A673 (cell line): ENCODE measurements at regions of chr11 and their contacts with region 1.

Region 1: DNA sequence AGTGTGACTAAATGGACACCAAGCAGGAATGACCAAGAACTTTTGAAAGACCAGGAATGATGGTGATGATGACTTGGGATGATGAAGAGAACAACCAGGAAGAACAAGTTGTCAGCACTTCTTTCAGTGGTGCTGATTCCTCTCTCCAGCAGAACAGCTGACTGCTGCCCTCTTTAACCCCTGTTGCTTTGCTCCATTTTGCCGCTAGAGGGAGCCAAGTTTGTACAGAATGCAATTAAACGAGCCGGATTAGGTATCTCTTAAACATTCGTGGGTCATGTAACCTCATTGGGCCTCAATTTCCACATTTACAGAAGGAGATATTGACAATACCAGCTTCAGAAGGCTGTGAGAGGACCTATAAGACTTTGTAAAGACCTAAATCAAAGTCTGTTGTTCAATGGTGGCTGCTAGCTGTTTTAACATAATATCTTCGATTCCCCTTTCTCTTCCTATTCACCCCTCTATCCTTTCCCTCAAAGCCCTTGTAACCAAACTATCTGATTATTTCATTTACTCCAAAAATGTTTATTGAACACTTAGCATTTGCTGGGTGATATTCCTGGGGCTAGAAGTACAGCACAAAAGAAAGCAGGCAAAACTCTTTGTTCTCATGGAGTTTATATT is 1.9 kb downstream of the OR4S1 start:
- DNase-seq: peak; percentile 91
- H3K4me3 ChIP-seq: no peak overlapping the region
- H3K27ac ChIP-seq: no peak overlapping the region
- H3K4me1 ChIP-seq: no peaks in the 10 kb centered on the region
- H3K27me3 ChIP-seq: no peaks in the 10 kb centered on the region
- CTCF ChIP-seq: peak; percentile 100

Region 2: DNA sequence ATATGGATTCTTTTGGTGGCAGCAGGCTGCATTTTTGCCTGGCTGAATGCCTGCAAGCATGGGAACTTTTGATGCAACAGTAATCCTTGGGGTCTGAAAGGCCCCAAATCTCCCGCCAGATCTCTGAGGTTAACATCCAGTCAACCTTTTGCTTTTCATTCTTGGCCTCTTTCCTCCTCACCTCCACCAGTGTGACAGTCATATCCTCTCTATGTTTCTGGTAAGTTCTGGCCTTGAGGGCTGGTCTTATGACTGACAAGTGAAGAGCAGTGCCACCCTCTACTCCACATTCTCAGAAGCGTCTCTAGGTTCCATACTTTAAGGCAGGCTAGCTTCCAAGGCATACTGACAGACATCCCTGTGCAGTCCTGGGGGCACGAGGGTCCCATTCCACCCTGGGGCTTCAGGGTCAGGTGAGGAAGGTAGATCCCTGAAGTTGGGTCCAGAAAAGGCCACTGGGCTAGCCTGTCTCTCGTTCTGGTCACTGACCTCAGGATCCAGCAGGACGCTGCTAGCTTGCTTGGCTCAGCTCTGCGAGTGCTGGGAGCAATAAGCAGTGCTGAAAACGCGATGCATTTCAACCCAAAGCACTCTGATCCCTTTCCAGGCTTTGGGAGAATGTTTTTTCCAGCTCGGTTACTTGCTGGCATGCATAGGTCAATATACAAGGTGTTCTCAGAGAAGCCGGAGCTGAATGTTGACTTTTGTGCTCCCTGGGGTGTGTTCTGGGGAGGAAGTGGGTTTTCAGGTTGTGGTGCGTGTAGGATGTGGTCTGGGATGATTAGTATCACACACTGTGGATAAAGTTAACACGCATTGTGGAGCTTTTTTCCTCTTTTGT is 252.4 kb before region 1 on chr11:
- CTCF ChIA-PET with region 1: no interaction called
- POLR2A ChIA-PET with region 1: no interaction called
- intact Hi-C with region 1: no loop called
- DNase-seq: no peak
- H3K4me3 ChIP-seq: no peak overlapping the region
- H3K27ac ChIP-seq: no peak overlapping the region
- H3K4me1 ChIP-seq: no peaks in the 10 kb centered on the region
- H3K27me3 ChIP-seq: no peaks in the 10 kb centered on the region
- CTCF ChIP-seq: no peak

Region 3: DNA sequence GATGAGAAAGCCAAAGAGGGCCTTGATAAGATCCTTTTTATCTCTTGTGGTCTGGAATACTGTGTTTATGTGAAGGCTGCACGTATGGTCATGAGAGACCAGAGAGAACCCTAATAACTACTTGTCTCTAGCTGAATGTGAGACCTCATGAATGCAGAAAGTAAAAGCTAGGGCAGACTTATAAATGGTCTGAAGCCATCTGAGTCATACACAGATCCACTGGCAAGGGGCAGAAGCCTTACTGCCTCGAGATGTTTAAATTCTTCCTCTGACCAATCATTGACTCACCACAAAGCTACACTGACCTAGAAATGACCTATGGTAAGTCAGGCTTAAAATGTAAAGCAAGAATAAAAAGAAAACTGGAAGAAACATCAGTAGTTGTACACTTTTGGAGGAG is 114.0 kb before region 1 on chr11:
- CTCF ChIA-PET with region 1: no interaction called
- POLR2A ChIA-PET with region 1: no interaction called
- intact Hi-C with region 1: no loop called
- DNase-seq: no peak
- H3K4me3 ChIP-seq: no peak overlapping the region
- H3K27ac ChIP-seq: no peak overlapping the region
- H3K4me1 ChIP-seq: no peaks in the 10 kb centered on the region
- H3K27me3 ChIP-seq: no peaks in the 10 kb centered on the region
- CTCF ChIP-seq: no peak

Region 4: GRCh38 chr11:48242501-48242900 is 65.4 kb before region 1 on chr11:
- CTCF ChIA-PET with region 1: no interaction called
- POLR2A ChIA-PET with region 1: no interaction called
- intact Hi-C with region 1: loop called (anchors 10 kb)
- DNase-seq: no peak
- H3K4me3 ChIP-seq: no peak overlapping the region
- H3K27ac ChIP-seq: no peak overlapping the region
- H3K4me1 ChIP-seq: no peaks in the 10 kb centered on the region
- H3K27me3 ChIP-seq: no peaks in the 10 kb centered on the region
- CTCF ChIP-seq: no peak

Region 5: DNA sequence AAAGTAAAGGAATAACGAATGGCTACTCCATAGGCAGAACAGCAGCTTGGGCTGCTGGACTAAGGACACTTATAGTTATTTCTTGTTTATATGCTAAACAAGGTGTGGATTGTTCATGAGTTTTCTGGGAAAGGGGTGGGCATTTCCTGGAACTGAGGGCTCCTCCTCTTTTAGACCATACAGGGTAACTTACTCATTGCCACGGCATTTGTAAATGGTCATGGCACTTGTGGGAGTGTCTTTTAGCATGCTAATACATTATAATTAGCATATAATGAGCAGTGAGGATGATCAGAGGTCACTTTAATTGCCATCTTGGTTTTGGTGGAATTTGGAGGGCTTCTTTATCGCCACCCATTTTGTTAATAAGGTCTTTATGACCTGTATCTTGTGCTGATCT is 37.3 kb before region 1 on chr11:
- CTCF ChIA-PET with region 1: no interaction called
- POLR2A ChIA-PET with region 1: no interaction called
- intact Hi-C with region 1: no loop called
- DNase-seq: no peak
- H3K4me3 ChIP-seq: no peak overlapping the region
- H3K27ac ChIP-seq: no peak overlapping the region
- H3K4me1 ChIP-seq: no peaks in the 10 kb centered on the region
- H3K27me3 ChIP-seq: no peaks in the 10 kb centered on the region
- CTCF ChIP-seq: no peak

Region 6: DNA sequence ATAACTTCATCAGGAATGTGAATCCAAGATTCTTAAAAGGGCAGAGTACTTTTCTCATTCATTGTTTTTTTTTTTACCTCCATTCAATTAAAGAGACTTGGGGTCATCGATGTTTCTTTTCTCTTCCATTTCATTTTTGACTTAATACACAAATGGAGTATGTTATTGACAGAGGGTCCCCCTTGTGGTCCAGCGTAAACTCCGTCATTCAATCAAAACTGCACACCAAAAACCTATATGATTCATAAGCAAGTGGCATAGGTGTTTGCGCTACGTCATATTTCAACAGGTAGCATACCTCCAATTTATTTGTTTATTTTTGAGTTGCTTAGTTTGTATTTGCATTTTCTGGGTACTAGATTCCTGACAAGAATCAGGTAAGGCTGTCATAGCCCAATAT is 913.2 kb after region 1 on chr11:
- CTCF ChIA-PET with region 1: no interaction called
- POLR2A ChIA-PET with region 1: no interaction called
- intact Hi-C with region 1: loop called (anchors 5 kb)
- DNase-seq: peak; percentile 23
- H3K4me3 ChIP-seq: no peak overlapping the region
- H3K27ac ChIP-seq: no peak overlapping the region
- H3K4me1 ChIP-seq: peaks cover 12% of the 10 kb centered on the region
- H3K27me3 ChIP-seq: no peaks in the 10 kb centered on the region
- CTCF ChIP-seq: peak; percentile 53